Activated T-helper 1 cell treated with anti-CD3 and anti-CD28 coated beads, Interleukin-12 subunit alpha, Interleukin-12 subunit beta, Interleukin-2, Interleukin-4 antibody, amounts not matched to agents 30 ng/mL and 10 ng/mL and 1 ng/mL, durations not matched to agents 14 hours and 24 hours and 36 hours (primary cell): ENCODE measurements at regions of chr3 and their contacts with region 1.

Region 1: GRCh38 chr3:155701882-155702465 is 42.9 kb downstream of the PLCH1 start:
- DNase-seq: no peak
- H3K4me3 Mint-ChIP-seq: no peak overlapping the region
- H3K27ac Mint-ChIP-seq: no peak overlapping the region
- H3K4me1 Mint-ChIP-seq: no peaks in the 10 kb centered on the region
- H3K27me3 Mint-ChIP-seq: peaks cover 17% of the 10 kb centered on the region

Region 2: DNA sequence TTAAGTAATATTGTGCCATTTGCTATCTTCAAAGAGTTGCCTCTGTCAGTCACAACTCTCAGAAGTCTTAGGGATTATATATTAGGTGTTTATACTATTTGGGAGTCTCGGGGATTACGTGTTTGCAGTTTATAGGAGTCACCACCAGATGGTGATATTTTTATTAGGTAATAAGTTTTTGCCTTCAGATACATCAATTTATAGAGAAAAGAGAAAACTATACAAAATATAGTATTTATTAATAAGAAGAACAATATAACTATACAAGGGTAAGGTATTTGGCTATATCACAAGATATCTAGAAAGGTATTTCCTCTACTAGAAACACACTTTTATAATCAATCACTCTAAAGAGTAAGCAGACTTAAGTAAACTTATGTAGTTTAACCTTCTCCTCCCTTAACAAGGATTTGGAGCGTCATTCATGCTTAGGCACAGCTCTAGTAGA is 1367.0 kb before region 1 on chr3:
- intact Hi-C with region 1: loop called (anchors 2 kb)
- DNase-seq: no peak
- H3K4me3 Mint-ChIP-seq: no peak overlapping the region
- H3K27ac Mint-ChIP-seq: no peak overlapping the region
- H3K4me1 Mint-ChIP-seq: no peaks in the 10 kb centered on the region
- H3K27me3 Mint-ChIP-seq: peaks cover 27% of the 10 kb centered on the region

Region 3: DNA sequence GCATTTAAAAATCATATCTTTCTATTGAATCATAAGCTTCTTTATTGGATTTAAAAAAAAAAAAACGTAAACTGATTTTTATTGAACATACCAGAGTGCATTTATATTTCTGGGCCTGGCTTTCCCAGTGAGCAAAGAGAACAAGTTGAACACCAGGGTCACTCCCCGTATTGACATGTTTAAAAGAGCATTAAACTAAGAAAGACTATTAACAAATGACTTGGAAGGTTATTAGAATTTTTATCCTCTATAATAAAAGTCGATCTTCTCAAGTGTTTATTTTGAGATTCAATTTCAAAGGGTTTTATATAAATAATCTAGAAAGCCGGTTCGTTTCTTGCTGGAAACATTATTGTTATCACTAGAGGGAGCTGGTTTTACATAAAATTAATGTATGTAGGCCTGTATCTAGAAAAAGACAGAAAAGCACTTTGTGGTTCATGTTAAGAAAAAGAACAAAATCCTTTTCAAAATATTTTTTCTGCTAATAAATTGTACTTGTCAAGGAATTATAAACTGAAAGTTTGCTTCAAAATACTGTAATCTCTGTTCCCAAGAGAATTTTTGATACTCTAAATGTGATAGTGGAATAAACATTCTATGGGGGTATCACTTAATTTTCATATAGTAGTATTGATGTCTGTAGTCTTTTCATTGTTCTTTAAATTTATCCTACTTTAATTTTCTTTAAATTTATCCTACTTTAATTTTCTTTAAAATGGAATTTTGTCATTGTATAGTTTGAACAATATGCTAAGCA is 943.7 kb before region 1 on chr3:
- intact Hi-C with region 1: loop called (anchors 10 kb)
- DNase-seq: no peak
- H3K4me3 Mint-ChIP-seq: no peak overlapping the region
- H3K27ac Mint-ChIP-seq: no peak overlapping the region
- H3K4me1 Mint-ChIP-seq: no peaks in the 10 kb centered on the region
- H3K27me3 Mint-ChIP-seq: no peaks in the 10 kb centered on the region

Region 4: DNA sequence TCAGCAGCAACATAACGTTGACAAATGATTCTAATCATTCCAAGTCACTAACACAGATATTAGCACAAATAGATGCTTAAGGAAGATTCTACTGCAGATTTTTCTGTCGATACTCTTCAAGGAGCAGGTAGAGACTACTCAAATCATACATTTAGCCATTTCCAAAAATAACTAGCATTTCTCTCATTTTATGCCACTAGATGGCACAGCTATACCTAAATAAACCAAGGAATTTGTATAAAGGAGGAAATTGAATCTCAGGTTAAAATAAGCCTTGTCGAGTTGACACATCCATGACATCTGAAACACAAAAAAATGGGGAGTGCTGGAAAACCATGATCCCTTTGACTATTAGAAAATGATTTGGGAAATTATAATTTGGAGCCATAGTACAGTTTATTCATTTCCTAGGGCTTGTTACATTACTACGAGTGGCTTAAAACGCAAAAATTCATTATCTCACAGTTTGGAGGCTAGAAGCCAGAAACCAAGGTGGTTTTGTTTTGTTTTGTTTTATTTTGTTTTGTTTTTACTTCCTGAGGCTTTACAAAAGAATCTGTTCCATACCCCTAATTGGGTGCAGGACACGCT is 349.0 kb before region 1 on chr3:
- intact Hi-C with region 1: loop called (anchors 1 kb)
- DNase-seq: no peak
- H3K4me3 Mint-ChIP-seq: no peak overlapping the region
- H3K27ac Mint-ChIP-seq: no peak overlapping the region
- H3K4me1 Mint-ChIP-seq: no peaks in the 10 kb centered on the region
- H3K27me3 Mint-ChIP-seq: peaks cover 3% of the 10 kb centered on the region

Region 5: DNA sequence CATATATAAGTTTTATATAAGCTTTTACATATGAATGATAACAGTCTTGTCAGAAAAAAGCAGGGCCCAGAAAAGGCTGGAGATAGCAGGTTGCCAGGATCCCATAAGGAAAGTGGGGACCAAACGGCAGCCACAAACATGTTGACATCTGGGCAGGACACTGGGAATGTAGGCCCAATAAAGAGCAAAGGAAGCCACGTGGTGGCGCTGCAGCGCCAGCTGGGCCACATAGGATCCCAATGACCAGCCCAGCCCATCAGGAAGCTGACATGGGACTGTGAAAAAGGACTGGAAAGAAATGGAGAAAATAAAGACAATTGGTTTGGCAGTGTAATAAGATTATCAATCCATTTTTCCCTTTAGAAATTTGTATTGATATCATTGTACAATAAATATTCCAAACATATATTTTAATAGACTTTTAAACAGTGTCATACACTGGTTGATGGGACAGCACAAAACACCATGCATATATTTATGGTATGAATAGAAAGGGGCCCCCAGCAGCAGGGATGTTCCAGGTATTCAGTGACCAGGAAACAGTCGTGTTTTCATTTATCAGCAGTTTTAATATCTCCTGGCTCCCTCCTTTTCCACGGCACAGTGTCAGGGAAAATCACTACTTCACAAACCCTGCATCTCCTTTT is 319.5 kb before region 1 on chr3:
- intact Hi-C with region 1: loop called (anchors 1 kb)
- DNase-seq: no peak
- H3K4me3 Mint-ChIP-seq: no peak overlapping the region
- H3K27ac Mint-ChIP-seq: no peak overlapping the region
- H3K4me1 Mint-ChIP-seq: no peaks in the 10 kb centered on the region
- H3K27me3 Mint-ChIP-seq: peaks cover 3% of the 10 kb centered on the region